ENCODE measurements at regions of chr17 and their contacts with region 1.

Region 1: GRCh38 chr17:74493381-74493833 is 27.0 kb downstream of the CD300A start:
- DNase-seq: peak; percentile 76
- ATAC-seq: peak; percentile 72
- H3K4me3 Mint-ChIP-seq: no peak overlapping the region
- H3K27ac Mint-ChIP-seq: no peak overlapping the region
- H3K4me1 Mint-ChIP-seq: peaks cover 13% of the 10 kb centered on the region
- H3K27me3 Mint-ChIP-seq: peaks cover 12% of the 10 kb centered on the region

Region 2: DNA sequence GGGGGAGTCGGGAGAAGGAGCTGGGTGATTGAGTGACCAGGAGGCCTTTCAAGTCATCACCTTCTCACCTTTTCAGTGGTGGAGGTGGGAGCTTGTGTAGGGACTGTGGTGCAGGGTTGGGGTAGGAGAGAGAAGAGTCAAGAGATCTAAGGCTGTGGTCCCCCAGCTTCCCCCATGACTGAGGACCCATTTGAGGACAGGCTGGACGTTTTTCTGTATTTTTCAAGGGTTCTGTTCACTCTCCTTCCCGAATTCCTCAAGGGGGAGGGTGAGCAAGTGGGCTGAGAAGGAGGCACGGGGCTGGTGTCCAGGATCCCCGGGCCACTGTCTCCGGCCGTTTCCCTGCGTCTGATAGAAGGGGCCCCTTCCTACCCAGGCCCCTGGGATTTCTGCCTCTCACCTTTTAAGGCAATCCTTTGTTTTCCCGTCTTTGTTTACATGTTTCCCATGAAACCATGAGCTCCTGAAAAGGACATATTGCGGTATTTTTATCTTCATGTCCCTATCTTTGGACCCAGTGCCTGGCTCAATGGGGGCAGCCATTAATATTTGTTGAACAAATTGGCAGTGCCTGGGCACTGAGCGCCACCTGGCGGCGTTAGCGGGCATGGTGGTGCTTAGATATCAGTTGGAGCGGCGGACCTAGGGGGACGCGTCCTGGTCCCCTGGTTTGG is 36.1 kb before region 1 on chr17:
- CTCF ChIA-PET with region 1: interaction called, 15 read pairs
- POLR2A ChIA-PET with region 1: interaction called, 3 read pairs
- DNase-seq: peak; percentile 77
- ATAC-seq: peak; percentile 41
- H3K4me3 Mint-ChIP-seq: no peak overlapping the region
- H3K27ac Mint-ChIP-seq: no peak overlapping the region
- H3K4me1 Mint-ChIP-seq: peaks cover 33% of the 10 kb centered on the region
- H3K27me3 Mint-ChIP-seq: peaks cover 25% of the 10 kb centered on the region